Ovary (tissue), 10 donors: ENCODE measurements at regions of chr2 and their contacts with region 1.

Region 1: GRCh38 chr2:182650704-182651103 is 65.4 kb upstream of the DNAJC10 start:
- DNase-seq: no peak
- H3K4me3 ChIP-seq: no peak overlapping the region
- H3K27ac ChIP-seq: no peak overlapping the region
- H3K4me1 ChIP-seq: no peaks in the 10 kb centered on the region
- H3K27me3 ChIP-seq: no peaks in the 10 kb centered on the region
- CTCF ChIP-seq: peak in 2 of 3 donors; percentile 41 to 49
- EP300 ChIP-seq: no peak
- POLR2A ChIP-seq: no peak

Region 2: GRCh38 chr2:182186132-182186735 is 464.5 kb before region 1 on chr2:
- intact Hi-C with region 1: loop called (anchors 5 to 10 kb)
- DNase-seq: no peak
- H3K4me3 ChIP-seq: no peak overlapping the region
- H3K27ac ChIP-seq: no peak overlapping the region
- H3K4me1 ChIP-seq: no peaks in the 10 kb centered on the region
- H3K27me3 ChIP-seq: no peaks in the 10 kb centered on the region
- CTCF ChIP-seq: peak; percentile 14 to 65 (median 56)
- EP300 ChIP-seq: no peak
- POLR2A ChIP-seq: no peak